Activated CD4-positive, alpha-beta T cell treated with anti-CD3 and anti-CD28 coated beads, Interleukin-2, amount 10 ng/mL, durations not matched to agents 24 days and 14 days (primary cell): ENCODE measurements at regions of chr1 and their contacts with region 1.

Region 1: GRCh38 chr1:231626535-231626945 is at the start of gene DISC1:
- DNase-seq: peak; percentile 93
- H3K4me3 Mint-ChIP-seq: peak within 1 kb of the TSS; percentile 86
- H3K27ac Mint-ChIP-seq: peak within 1 kb of the TSS; percentile 82
- H3K4me1 Mint-ChIP-seq: peaks cover 30% of the 10 kb centered on the region
- H3K27me3 Mint-ChIP-seq: peaks cover 30% of the 10 kb centered on the region
- total RNA-seq, gene DISC1: 1.6 and 3.1 TPM in 2 replicates

Region 2: DNA sequence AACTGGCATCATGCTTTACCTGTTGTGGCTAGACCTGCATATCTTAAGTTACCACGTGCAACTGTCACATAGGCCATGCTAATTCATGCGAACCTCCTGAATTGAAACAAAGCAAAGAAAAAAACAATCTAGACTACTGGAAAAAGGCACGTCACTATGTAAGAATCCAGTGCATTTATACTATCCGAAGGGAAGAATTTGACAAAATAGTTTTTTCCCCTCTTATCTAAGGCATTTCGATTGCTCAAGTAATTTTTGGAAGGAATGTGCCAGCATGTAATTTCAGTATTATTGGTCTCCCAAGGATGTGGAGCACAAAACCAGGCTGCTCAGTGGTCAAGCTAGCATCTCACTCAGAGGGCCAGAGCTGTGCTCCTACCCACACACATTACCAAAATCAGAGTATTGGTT is 726.7 kb before region 1 on chr1:
- intact Hi-C with region 1: no loop called
- DNase-seq: no peak
- H3K4me3 Mint-ChIP-seq: no peak overlapping the region
- H3K27ac Mint-ChIP-seq: no peak overlapping the region
- H3K4me1 Mint-ChIP-seq: no peaks in the 10 kb centered on the region
- H3K27me3 Mint-ChIP-seq: no peaks in the 10 kb centered on the region

Region 3: DNA sequence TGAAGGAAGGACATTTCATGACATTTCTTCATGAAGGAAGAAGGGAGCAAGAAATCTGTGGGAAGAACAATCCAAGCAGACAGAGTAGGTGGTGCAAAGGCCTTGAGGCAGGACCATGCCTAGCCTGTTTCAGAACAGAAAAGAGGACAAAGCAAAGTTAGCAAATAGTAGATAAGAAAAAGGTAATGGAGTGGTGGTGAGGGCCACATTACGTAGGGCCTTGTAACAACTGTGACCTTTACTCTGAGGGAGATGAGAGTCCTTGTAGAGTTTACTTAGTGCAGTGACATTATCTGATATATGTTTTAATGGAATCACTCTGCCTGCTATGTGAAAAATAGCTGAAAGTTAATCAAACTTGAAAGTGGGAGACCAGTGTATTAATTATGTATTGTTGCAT is 104.5 kb before region 1 on chr1:
- intact Hi-C with region 1: no loop called
- DNase-seq: no peak
- H3K4me3 Mint-ChIP-seq: no peak overlapping the region
- H3K27ac Mint-ChIP-seq: no peak overlapping the region
- H3K4me1 Mint-ChIP-seq: peaks cover 2% of the 10 kb centered on the region
- H3K27me3 Mint-ChIP-seq: peaks cover 12% of the 10 kb centered on the region

Region 4: GRCh38 chr1:231612393-231613089 is 14.0 kb before region 1 on chr1:
- intact Hi-C with region 1: loop called (anchors 2 kb)
- DNase-seq: peak; percentile 89
- H3K4me3 Mint-ChIP-seq: peak overlapping the region; percentile 79
- H3K27ac Mint-ChIP-seq: peak overlapping the region; percentile 86
- H3K4me1 Mint-ChIP-seq: peaks cover 45% of the 10 kb centered on the region
- H3K27me3 Mint-ChIP-seq: peaks cover 8% of the 10 kb centered on the region